ENCODE measurements at regions of chr9 and their contacts with region 1.

Region 1: GRCh38 chr9:3571500-3571899 is 45.7 kb upstream of the RFX3 start:
- H3K4me3 Mint-ChIP-seq: no peak overlapping the region
- H3K27ac Mint-ChIP-seq: no peak overlapping the region
- H3K4me1 Mint-ChIP-seq: peaks cover 7% of the 10 kb centered on the region
- H3K27me3 Mint-ChIP-seq: no peaks in the 10 kb centered on the region

Region 2: DNA sequence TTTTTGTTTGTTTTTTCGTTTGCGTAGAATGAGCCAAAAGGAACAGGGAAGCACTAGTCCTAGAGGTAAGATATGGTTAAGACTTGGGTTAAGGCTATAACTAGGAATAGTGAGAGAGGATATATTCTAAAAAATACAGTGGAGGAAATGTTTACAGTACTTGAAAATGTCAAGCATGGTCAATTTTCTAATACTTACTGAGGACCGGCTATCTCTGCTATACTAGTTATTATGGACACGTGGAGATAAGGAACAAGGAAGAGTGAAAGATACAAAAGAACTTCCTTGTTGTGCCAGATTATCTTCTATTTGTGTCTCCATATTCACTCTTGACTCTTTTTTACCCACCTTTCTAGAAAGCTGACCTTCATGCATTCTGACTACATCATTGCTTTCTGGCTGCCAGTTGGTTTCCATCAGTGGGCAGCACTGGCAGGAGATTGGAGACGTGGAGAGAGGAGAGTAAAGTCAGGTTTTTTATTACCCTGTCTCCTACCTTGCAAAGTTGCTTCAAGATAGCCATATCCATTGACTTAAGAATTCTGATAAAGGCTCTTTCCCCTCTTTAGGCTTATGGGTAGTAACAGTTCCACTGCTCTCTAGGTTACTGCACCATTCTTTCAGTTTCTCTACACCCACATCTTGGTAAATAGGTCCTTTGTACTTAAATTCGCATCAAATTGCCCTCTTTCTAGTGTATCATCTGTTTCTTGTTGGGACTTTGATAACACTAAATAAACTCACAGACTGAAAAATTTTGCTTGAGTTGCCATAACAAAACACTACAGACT is 36.7 kb before region 1 on chr9:
- intact Hi-C with region 1: loop called (anchors 5 kb)
- H3K4me3 Mint-ChIP-seq: no peak overlapping the region
- H3K27ac Mint-ChIP-seq: no peak overlapping the region
- H3K4me1 Mint-ChIP-seq: no peaks in the 10 kb centered on the region
- H3K27me3 Mint-ChIP-seq: no peaks in the 10 kb centered on the region